Endothelial cell of umbilical vein (primary cell): ENCODE measurements at regions of chr21 and their contacts with region 1.

Region 1: GRCh38 chr21:44792702-44793591 is 8.7 kb downstream of the UBE2G2 start:
- DNase-seq: peak; percentile 63
- H3K4me3 ChIP-seq: no peak overlapping the region
- H3K27ac ChIP-seq: no peak overlapping the region
- H3K4me1 ChIP-seq: no peaks in the 10 kb centered on the region
- H3K27me3 ChIP-seq: no peaks in the 10 kb centered on the region
- CTCF ChIP-seq: peak; percentile 70 to 71
- POLR2A ChIP-seq: no peak

Region 2: GRCh38 chr21:44503901-44504399 is 289.0 kb before region 1 on chr21:
- CTCF ChIA-PET with region 1: interaction called, 11 read pairs
- POLR2A ChIA-PET with region 1: no interaction called
- dilution Hi-C with region 1: no loop called
- intact Hi-C with region 1: no loop called
- DNase-seq: no peak
- H3K4me3 ChIP-seq: no peak overlapping the region
- H3K27ac ChIP-seq: no peak overlapping the region
- H3K4me1 ChIP-seq: no peaks in the 10 kb centered on the region
- H3K27me3 ChIP-seq: no peaks in the 10 kb centered on the region
- CTCF ChIP-seq: no peak
- POLR2A ChIP-seq: no peak

Region 3: GRCh38 chr21:44618504-44618903 is 174.4 kb before region 1 on chr21:
- CTCF ChIA-PET with region 1: interaction called, 28 read pairs
- POLR2A ChIA-PET with region 1: no interaction called
- dilution Hi-C with region 1: no loop called
- intact Hi-C with region 1: no loop called
- DNase-seq: peak; percentile 7
- H3K4me3 ChIP-seq: no peak overlapping the region
- H3K27ac ChIP-seq: no peak overlapping the region
- H3K4me1 ChIP-seq: no peaks in the 10 kb centered on the region
- H3K27me3 ChIP-seq: no peaks in the 10 kb centered on the region
- CTCF ChIP-seq: peak in 1 of 2 donors; percentile 27
- POLR2A ChIP-seq: no peak

Region 4: DNA sequence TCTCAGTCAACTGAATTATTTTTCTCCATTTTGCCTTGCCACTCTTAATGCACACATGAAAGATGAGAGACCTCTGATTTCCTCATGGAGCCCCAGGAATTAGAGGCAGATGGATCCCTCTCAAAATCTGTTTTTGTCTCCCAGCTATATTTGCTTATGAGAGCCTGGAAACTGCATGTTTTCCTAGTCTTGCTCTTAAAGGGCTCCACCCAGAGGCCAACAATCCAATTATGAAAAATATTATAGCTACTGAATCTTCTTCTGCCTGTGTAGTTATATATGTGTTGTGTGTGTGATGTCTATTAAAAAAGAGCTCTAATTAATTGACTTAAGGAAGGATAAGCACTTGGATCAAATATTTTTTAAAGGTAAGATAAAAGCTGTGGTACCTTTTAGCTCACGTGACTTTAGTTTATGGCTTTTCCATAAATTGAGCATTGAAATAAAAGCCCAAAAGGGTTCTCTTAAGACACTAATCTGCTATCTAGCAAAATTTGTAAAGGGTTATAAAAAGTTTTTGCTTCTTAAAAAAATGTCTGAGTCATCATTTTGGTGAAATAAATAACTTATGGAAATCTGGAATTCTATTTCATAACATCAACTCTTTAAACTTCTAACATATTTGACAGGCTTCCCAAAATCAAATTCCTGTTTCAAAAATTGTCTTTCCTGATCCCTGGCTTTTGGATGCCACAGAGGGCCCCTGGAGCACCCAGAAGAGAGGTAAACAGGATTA is 50.4 kb before region 1 on chr21:
- CTCF ChIA-PET with region 1: interaction called, 25 read pairs
- POLR2A ChIA-PET with region 1: no interaction called
- dilution Hi-C with region 1: no loop called
- intact Hi-C with region 1: no loop called
- DNase-seq: peak; percentile 13
- H3K4me3 ChIP-seq: no peak overlapping the region
- H3K27ac ChIP-seq: no peak overlapping the region
- H3K4me1 ChIP-seq: no peaks in the 10 kb centered on the region
- H3K27me3 ChIP-seq: peaks cover 13 to 17% of the 10 kb centered on the region in 2 experiments
- CTCF ChIP-seq: peak in 1 of 2 donors; percentile 10
- POLR2A ChIP-seq: no peak

Region 5: GRCh38 chr21:44765231-44766013 is 27.5 kb before region 1 on chr21:
- CTCF ChIA-PET with region 1: interaction called, 13 read pairs
- POLR2A ChIA-PET with region 1: no interaction called
- dilution Hi-C with region 1: no loop called
- intact Hi-C with region 1: no loop called
- DNase-seq: peak; percentile 6
- H3K4me3 ChIP-seq: no peak overlapping the region
- H3K27ac ChIP-seq: no peak overlapping the region
- H3K4me1 ChIP-seq: peaks cover 5% of the 10 kb centered on the region
- H3K27me3 ChIP-seq: no peaks in the 10 kb centered on the region
- CTCF ChIP-seq: no peak
- POLR2A ChIP-seq: no peak

Region 6: GRCh38 chr21:44866780-44867179 is 73.8 kb after region 1 on chr21:
- CTCF ChIA-PET with region 1: no interaction called
- POLR2A ChIA-PET with region 1: no interaction called
- dilution Hi-C with region 1: no loop called
- intact Hi-C with region 1: no loop called
- DNase-seq: peak; percentile 84
- H3K4me3 ChIP-seq: no peak overlapping the region
- H3K27ac ChIP-seq: peak overlapping the region; percentile 97
- H3K4me1 ChIP-seq: peaks cover 59% of the 10 kb centered on the region
- H3K27me3 ChIP-seq: no peaks in the 10 kb centered on the region
- CTCF ChIP-seq: no peak
- POLR2A ChIP-seq: no peak

Region 7: DNA sequence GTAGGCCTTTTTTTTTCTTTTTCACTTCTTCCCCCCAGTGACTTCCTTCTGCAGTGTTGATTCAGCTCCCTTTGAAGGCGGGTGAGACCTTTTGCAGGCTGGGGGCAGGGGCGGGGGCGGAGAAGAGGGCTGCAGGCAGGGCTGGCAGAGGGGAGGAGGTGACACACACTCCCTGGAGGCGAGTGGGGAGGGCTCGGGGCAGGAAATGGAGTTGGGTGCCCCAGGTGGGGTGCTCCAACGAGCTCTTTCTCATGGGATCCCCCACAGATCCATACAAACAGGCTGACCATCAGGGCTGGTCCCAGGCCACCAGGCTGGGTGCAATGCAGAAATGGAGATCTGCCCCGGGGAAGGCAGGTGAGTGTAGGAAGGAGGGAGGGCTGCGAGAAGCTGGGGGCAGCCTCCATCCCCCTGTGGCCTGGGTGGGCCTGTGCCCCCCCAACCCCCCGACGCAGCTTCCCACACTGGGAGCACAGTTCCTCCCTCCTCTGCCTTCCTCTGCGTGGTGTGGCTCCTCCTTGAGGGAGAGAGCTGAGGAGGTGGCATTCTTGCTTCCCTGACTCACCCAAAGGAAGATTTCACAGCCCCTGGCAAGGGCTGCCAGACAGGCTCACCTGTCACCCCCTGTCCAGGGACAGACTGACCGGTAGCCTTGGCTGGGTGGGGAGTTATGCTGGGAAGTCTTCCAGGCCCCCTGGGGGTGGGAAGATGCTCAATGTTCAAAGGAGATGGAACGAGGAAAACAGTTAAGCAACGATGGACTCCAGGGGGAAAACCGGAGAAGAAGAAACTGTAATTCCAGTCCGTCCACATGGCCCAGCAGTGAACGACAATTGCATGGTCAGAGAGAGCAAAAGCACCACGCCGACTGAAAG is 134.9 kb after region 1 on chr21:
- CTCF ChIA-PET with region 1: interaction called, 16 read pairs
- POLR2A ChIA-PET with region 1: no interaction called
- dilution Hi-C with region 1: no loop called
- intact Hi-C with region 1: no loop called
- DNase-seq: no peak
- H3K4me3 ChIP-seq: no peak overlapping the region
- H3K27ac ChIP-seq: no peak overlapping the region
- H3K4me1 ChIP-seq: peaks cover 31% of the 10 kb centered on the region
- H3K27me3 ChIP-seq: peaks cover 7 to 16% of the 10 kb centered on the region in 2 experiments
- CTCF ChIP-seq: no peak
- POLR2A ChIP-seq: no peak

Region 8: DNA sequence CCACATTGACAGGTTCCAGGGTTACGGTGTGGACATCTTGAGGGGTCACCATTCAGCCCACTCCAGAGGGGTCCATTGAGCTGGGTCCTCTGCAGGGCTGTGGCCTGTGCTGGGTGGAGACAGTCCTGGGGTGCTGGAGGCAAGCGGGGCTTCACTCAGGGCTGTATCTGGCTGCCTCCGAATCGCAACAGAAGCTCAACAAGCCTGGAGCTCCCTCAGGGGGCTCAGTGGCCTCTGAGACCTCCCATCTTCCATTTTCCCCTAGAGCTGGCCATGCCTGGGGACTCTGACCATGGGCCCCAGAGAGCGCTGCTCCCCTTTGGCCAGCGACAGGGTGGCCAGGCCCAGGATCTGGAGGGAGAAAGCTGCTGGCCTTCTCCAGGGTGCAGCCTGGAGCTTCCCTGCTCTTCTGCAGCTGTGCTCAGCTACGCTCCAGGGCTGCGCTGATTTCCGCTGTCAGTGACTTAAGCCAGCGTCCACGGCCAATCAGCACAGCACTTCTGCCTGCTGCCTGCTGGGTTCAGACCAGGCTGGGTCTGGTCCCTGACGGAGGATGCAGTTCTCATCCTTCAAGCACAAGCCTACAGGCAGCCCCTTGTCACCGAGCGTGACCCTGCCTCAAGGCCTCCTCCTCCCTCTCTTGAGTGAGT is 236.5 kb after region 1 on chr21:
- CTCF ChIA-PET with region 1: no interaction called
- POLR2A ChIA-PET with region 1: no interaction called
- dilution Hi-C with region 1: no loop called
- intact Hi-C with region 1: no loop called
- DNase-seq: no peak
- H3K4me3 ChIP-seq: no peak overlapping the region
- H3K27ac ChIP-seq: no peak overlapping the region
- H3K4me1 ChIP-seq: no peaks in the 10 kb centered on the region
- H3K27me3 ChIP-seq: no peaks in the 10 kb centered on the region
- CTCF ChIP-seq: no peak
- POLR2A ChIP-seq: no peak